Activated CD4-positive, alpha-beta T cell treated with anti-CD3 and anti-CD28 coated beads for 36 hours (primary cell): ENCODE measurements at regions of chr7 and their contacts with region 1.

Region 1: DNA sequence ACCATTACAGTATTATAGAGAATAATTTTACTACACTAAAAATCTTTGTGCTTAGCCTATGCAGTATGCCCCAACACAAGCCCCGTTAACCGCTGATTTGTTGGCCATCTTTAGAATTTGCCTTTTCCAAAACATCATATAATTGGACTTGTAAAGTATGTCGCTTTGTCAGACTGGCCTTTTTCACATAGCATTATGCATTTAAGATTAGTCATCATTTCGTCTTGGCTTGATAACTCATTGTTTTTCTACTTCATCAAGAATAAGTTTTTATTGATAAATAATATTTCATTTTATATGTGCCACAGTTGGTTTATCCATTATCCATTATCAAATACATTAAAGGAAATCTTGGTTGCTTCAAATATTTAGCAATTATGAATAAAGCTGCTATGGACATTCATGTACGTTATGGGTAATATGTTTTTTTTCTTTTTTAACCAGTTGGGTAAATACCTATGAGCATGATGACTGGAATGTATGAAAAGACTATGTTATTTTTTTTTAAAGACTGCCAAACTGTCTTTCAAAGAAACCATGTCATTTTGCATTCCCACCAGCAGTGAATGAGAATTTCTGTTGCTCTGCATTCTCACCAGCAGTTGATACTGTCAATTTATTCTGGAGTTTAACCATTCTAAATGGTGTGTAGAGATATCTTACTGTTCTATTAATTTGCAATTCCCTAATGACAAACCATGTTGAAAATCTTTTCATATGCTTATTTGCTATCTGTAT is 273.1 kb upstream of the KCND2 start:
- DNase-seq: no peak
- ATAC-seq: no peak
- H3K4me3 Mint-ChIP-seq: no peak overlapping the region
- H3K27ac Mint-ChIP-seq: no peak overlapping the region
- H3K4me1 Mint-ChIP-seq: no peaks in the 10 kb centered on the region
- H3K27me3 Mint-ChIP-seq: no peaks in the 10 kb centered on the region

Region 2: DNA sequence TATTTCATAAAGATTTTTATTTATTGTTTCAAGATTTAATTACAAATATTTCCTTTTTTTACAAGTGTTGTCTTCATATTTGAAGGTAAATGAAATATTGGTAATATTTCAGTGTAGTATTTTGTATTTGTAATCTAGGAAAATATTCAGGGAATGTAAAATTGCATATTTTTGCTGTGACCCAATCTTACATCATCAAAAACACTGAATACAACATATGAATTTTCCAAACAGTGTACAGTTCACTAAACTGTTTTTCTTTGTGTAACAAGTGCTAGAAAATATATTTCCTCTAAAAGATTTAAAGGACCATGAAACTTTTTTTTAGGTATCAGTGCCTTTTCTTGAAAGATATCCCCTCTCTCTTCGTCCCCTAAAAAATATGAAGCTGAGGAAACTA is 21.2 kb after region 1 on chr7:
- CTCF ChIA-PET with region 1: no interaction called
- POLR2A ChIA-PET with region 1: no interaction called
- intact Hi-C with region 1: loop called in 1 of 2 experiments (anchors 2 kb)
- DNase-seq: no peak
- ATAC-seq: no peak
- H3K4me3 Mint-ChIP-seq: no peak overlapping the region
- H3K27ac Mint-ChIP-seq: no peak overlapping the region
- H3K4me1 Mint-ChIP-seq: no peaks in the 10 kb centered on the region
- H3K27me3 Mint-ChIP-seq: no peaks in the 10 kb centered on the region